Aorta (tissue), 5 donors: ENCODE measurements at regions of chr20 and their contacts with region 1.

Region 1: GRCh38 chr20:36881888-36882287 is 6.0 kb downstream of the TLDC2 start:
- DNase-seq: no peak
- ATAC-seq: no peak
- H3K4me3 ChIP-seq: no peak overlapping the region
- H3K27ac ChIP-seq: no peak overlapping the region
- H3K4me1 ChIP-seq: no peaks in the 10 kb centered on the region
- H3K27me3 ChIP-seq: no peaks in the 10 kb centered on the region

Region 2: DNA sequence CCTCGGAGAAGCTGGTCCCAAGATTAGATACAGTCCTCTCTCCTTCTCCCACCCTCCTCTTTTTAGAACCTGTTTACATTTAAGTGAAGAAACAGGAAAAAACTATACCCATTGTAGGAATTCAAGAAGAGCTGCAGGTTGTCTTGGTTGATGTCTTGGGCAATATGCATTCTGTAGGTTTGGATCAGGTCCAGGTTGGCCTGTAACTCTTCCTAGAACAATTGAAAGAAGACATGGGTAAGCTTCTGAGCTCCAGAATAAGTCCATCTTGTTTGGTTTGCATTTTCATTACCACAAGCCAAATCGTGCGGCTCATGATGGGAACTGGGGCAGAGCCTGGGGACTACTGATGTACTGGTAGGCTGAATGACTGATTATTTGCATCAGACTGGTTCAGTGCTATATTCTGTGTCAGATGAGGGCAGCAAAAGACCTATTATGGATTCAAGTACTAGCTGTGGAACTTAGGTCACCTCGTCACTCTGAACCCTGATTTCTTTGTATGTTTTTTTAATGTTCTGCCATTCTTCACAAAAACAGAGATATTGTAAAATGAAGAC is 215.6 kb before region 1 on chr20:
- intact Hi-C with region 1: loop called in 1 of 2 experiments (anchors 5 kb)
- DNase-seq: no peak
- ATAC-seq: no peak
- H3K4me3 ChIP-seq: no peak overlapping the region
- H3K27ac ChIP-seq: no peak overlapping the region
- H3K4me1 ChIP-seq: no peaks in the 10 kb centered on the region
- H3K27me3 ChIP-seq: no peaks in the 10 kb centered on the region

Region 3: DNA sequence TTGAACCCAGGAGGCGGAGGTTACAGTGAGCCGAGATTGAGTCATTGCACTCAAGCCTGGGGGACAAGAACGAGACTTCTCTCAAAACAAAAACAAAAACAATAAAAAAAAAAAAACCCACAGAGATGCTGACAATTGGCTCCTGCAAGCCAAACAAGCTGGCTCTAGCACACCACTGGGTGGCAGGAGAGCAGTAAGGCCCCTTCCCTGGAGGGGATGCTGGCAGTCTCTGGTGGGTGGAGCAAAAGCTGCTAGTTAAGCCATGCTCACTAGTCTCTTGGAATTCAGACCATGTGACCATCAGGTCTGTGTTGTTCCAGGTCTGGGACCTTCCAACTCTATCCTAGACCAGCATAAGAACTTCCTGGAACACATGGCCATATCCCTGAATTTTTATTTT is 89.5 kb before region 1 on chr20:
- intact Hi-C with region 1: loop called (anchors 5 kb)
- DNase-seq: peak; percentile 73 to 83
- ATAC-seq: peak; percentile 74
- H3K4me3 ChIP-seq: no peak overlapping the region
- H3K27ac ChIP-seq: no peak overlapping the region
- H3K4me1 ChIP-seq: no peaks in the 10 kb centered on the region
- H3K27me3 ChIP-seq: no peaks in the 10 kb centered on the region

Region 4: GRCh38 chr20:37020636-37021035 is 138.7 kb after region 1 on chr20:
- intact Hi-C with region 1: no loop called
- DNase-seq: no peak
- ATAC-seq: no peak
- H3K4me3 ChIP-seq: no peak overlapping the region
- H3K27ac ChIP-seq: no peak overlapping the region
- H3K4me1 ChIP-seq: no peaks in the 10 kb centered on the region
- H3K27me3 ChIP-seq: no peaks in the 10 kb centered on the region